K562 (cell line): ENCODE measurements at regions of chr1 and their contacts with region 1.

Region 1: DNA sequence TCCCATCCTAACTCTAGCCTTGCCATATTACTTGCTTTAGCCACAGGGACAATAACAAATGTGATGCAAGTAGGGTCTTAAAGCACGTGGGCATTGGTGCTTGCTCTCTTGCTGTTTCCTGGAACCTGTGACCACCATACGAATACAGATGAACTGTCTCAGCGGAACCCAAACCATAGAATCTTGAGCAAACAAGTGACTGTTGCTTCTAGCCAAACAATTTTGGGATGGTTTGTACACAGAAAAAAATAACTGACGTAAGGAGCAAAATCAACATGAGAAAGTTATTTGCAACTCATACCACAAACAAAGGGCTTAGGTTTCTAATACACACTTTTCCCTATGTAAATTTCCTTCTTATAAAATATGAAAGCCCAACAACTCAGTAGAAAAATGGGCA is 15.2 kb upstream of the VTCN1 start:
- DNase-seq: no peak
- ATAC-seq: no peak
- H3K4me3 ChIP-seq: no peak overlapping the region
- H3K27ac ChIP-seq: no peak overlapping the region
- H3K4me1 ChIP-seq: no peaks in the 10 kb centered on the region
- H3K27me3 ChIP-seq: peaks cover 5 to 14% of the 10 kb centered on the region in 2 experiments; a peak in 3 of 5 replicates
- CTCF ChIP-seq: no peak
- EP300 ChIP-seq: no peak
- POLR2A ChIP-seq: no peak
- RAD21 ChIP-seq: no peak

Region 2: GRCh38 chr1:117250061-117250606 is 24.2 kb after region 1 on chr1:
- CTCF ChIA-PET with region 1: no interaction called
- POLR2A ChIA-PET with region 1: no interaction called
- in situ Hi-C with region 1: no loop called
- intact Hi-C with region 1: loop called (anchors 2 kb)
- DNase-seq: no peak
- ATAC-seq: no peak
- H3K4me3 ChIP-seq: no peak overlapping the region
- H3K27ac ChIP-seq: no peak overlapping the region
- H3K4me1 ChIP-seq: no peaks in the 10 kb centered on the region
- H3K27me3 ChIP-seq: peaks cover 0 to 6% of the 10 kb centered on the region in 2 experiments; a peak in 2 of 5 replicates
- CTCF ChIP-seq: no peak
- EP300 ChIP-seq: no peak
- POLR2A ChIP-seq: no peak
- RAD21 ChIP-seq: no peak